H1 (cell line): ENCODE measurements at regions of chr19 and their contacts with region 1.

Region 1: DNA sequence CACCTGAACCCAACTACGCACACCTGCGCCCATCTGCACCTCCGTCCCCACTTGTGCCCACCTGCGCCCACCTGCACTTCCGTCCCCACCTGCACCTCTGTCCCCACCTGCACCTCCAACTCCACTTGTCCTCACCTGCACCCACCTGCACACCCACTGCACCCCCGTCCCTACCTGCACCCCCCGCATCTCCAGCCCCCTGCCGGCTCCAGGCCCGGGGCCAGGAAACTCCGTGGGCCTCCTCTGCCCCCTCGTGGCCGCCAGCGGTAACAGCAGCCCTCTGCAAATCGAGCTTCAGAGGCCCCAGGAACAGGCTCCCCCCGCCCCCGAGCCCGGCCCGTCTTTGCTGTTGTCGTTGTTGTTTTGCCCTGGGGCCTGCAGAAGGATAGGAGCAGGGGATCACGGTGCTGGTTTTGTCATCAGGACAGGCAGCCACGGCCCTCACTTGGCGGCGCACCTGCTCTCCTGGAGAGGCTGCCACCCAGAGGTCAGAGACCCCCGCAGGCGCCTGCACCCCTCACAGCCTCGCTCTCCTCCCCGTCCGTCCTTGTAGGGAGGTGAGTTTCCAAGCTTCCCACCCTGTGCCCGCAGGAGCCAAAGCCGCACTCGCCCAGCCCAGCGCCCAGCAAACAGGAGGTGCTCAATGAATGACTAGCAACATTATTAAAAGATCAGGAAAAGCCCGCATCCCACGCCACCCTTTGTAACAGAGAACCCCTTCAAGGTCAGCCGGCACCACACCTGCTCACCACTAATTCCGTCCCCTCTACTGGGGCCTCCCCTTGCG is 65.4 kb downstream of the GNG7 start:
- DNase-seq: peak in 1 of 2 experiments; percentile 89
- H3K4me3 ChIP-seq: peak overlapping the region in 3 of 4 experiments; percentile 36 to 54 (median 38); a peak in 6 of 8 replicates
- H3K27ac ChIP-seq: no peak overlapping the region
- H3K4me1 ChIP-seq: peaks cover 0 to 4% (median 2%) of the 10 kb centered on the region in 4 experiments; a peak in 3 of 7 replicates
- H3K27me3 ChIP-seq: no peaks in the 10 kb centered on the region; a peak in 1 of 7 replicates
- CTCF ChIP-seq: peak; percentile 78 to 84 (median 82)
- EP300 ChIP-seq: no peak
- POLR2A ChIP-seq: no peak
- RAD21 ChIP-seq: peak; percentile 83 to 85

Region 2: DNA sequence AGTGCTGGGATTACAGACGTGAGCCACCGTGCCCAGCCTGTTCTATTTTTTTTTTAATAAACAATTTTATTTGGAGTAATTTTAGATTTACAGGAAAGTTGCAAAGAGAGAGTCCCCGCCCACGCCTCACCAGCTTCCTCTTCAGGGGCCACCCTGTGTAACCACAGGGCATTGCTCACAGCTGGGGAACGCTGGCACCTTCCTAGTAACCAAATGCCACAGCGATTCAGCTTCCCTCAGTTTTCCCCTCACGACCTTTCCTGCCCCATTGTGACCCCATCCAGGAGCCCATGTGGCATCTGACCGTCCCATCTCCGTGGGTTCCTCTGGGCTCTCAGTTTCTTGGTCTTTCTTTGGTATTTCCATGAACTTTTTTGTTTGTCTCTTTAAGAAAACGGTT is 18.5 kb before region 1 on chr19:
- CTCF ChIA-PET with region 1: interaction called, 17 read pairs
- POLR2A ChIA-PET with region 1: no interaction called
- DNase-seq: no peak
- H3K4me3 ChIP-seq: no peak overlapping the region
- H3K27ac ChIP-seq: no peak overlapping the region
- H3K4me1 ChIP-seq: peaks cover 0 to 3% (median 0%) of the 10 kb centered on the region in 4 experiments; a peak in 1 of 7 replicates
- H3K27me3 ChIP-seq: peaks cover 0 to 7% (median 2%) of the 10 kb centered on the region in 4 experiments; a peak in 1 of 7 replicates
- CTCF ChIP-seq: no peak
- EP300 ChIP-seq: no peak
- POLR2A ChIP-seq: no peak
- RAD21 ChIP-seq: no peak

Region 3: GRCh38 chr19:2668175-2668763 is 31.2 kb after region 1 on chr19:
- CTCF ChIA-PET with region 1: no interaction called
- POLR2A ChIA-PET with region 1: no interaction called
- DNase-seq: no peak
- H3K4me3 ChIP-seq: no peak overlapping the region
- H3K27ac ChIP-seq: no peak overlapping the region
- H3K4me1 ChIP-seq: peaks cover 0 to 4% (median 0%) of the 10 kb centered on the region in 4 experiments; a peak in 1 of 7 replicates
- H3K27me3 ChIP-seq: no peaks in the 10 kb centered on the region; a peak in 1 of 7 replicates
- CTCF ChIP-seq: no peak
- EP300 ChIP-seq: no peak
- POLR2A ChIP-seq: no peak
- RAD21 ChIP-seq: no peak

Region 4: DNA sequence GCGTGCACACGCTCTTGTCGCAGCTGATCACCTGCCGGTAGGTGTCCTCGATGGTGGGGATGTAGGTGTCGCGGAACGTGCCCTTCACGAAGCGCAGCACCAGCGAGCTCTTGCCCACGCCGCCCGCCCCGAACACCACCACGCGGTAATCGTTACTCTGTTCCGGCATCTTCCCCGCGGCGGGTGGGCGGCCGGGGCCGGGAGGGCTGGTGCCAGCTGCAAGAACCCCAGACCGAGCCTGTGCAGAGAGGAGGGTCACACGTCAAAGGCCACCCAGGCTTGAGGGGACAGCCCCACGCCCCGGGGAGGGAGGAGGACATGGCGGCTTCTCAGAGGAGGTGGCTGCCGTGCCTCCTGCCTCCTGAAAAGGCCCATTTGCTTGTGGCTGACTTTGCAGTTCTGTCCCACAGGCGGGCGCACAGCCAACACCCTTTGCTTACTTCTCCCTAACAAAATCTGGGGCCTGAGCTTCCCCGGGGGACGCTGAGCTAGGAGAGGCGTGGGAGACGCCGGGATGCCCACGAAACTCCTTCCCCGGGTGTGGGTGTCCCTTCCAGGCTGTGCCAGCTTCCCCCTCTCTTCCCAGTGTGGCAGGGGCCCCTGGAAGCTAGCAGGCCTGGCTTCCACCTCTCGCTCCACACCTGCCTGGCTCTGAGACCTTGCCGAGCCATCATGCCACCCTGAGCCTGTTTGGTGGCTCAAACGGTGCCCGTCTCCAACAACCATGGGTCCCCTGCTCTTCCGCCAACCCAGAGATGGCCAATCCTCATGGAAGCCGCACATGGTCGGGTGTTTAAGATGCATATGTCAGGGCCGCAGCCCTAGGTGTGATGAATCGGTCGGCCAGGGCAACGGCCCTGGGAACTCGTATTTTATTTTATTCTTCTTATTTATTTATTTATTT is 80.8 kb after region 1 on chr19:
- CTCF ChIA-PET with region 1: no interaction called
- POLR2A ChIA-PET with region 1: no interaction called
- DNase-seq: no peak
- H3K4me3 ChIP-seq: no peak overlapping the region
- H3K27ac ChIP-seq: no peak overlapping the region
- H3K4me1 ChIP-seq: peaks cover 0 to 14% (median 6%) of the 10 kb centered on the region in 4 experiments; a peak in 6 of 7 replicates
- H3K27me3 ChIP-seq: peaks cover 0 to 7% (median 3%) of the 10 kb centered on the region in 4 experiments; a peak in 4 of 7 replicates
- CTCF ChIP-seq: no peak
- EP300 ChIP-seq: no peak
- POLR2A ChIP-seq: no peak
- RAD21 ChIP-seq: no peak